ENCODE measurements at regions of chr6 and their contacts with region 1.

Region 1: DNA sequence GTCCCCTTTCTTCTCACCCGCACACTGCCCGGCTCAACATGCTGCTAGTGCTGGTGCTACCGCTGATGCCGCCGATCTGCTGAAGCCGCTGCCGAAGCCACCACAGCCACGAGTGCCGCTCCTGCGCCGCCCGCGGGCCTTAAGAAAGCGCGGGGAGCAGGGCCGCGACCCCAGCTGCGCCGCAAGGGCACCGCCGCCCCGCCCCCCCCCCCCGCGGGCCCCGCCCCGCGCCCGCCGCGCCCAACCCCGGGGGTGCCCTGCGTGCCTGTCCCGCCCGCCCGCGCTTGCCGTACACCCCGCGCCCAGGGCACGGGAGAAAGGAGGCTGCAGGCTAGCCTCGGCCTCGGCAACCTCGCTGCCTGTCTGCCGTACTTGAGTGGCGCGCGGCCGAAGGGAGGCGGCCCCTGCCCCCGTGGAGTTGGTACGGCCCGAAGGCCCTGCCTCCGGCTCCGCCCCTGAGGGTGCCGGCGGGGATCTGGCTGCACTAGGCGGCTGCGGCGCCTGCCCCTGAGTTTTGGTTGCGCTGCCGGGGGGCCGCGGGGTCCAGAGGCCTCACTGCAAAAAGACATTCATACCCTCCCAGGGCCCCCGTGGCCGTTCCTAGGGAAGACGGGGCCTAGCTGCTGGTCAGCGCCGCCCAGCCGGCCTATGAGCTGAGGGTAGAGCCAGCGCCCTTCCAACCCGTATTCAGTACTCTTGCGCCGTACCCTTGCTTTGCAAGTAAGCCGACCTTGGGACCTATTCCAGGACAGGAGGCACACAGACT is at the start of gene SOD2:
- DNase-seq: no peak
- H3K4me3 ChIP-seq: peak within 1 kb of the TSS; percentile 76
- CTCF ChIP-seq: no peak

Region 2: GRCh38 chr6:159679091-159680077 is 13.9 kb before region 1 on chr6:
- CTCF ChIA-PET with region 1: interaction called, 22 read pairs
- POLR2A ChIA-PET with region 1: no interaction called
- DNase-seq: no peak
- H3K4me3 ChIP-seq: no peak overlapping the region
- CTCF ChIP-seq: no peak

Region 3: GRCh38 chr6:159726918-159727716 is 33.8 kb after region 1 on chr6 and contains the start of gene WTAP:
- CTCF ChIA-PET with region 1: interaction called, 11 read pairs
- POLR2A ChIA-PET with region 1: interaction called, 10 read pairs
- DNase-seq: peak; percentile 54
- H3K4me3 ChIP-seq: peak within 1 kb of the TSS; percentile 83
- CTCF ChIP-seq: no peak

Region 4: DNA sequence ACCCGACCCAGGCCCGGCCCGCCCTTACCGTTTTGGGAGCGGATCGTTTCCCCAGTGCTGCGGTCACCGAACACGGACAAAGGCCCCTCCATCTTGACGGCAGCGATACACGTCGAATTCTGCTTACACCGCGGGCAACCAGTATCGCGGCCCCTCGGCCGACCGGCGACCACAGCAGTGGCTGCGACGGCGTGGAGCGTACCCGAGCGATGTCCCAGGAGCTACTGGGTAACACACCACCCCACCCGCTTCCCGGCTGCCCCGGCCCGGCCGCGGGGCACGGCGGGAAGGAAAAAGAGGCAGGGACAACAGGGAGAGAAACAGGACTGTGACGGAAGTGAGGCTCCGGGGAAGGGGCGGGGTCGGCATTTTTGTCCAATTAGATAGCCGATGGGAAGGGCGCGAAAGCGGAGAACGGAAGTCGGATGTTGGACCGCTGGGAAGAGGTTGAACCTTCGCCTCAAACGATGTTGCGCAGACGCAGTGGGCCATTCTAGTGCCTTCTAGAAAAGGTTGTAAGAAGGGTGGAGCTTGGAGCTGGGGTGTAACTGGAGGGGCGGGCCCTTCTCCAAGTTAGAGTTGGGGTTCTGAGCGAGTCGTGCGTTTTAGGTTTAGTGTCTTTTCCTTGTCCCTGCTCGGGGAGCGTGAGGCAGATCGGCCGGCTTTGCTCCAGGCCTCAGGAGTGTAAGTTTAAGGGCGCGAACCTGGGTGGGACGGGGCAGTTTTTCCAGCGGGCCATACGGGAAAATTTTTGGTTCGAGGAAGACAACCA is 96.3 kb after region 1 on chr6 and contains the start of gene TCP1:
- CTCF ChIA-PET with region 1: interaction called, 21 read pairs
- POLR2A ChIA-PET with region 1: interaction called, 12 read pairs
- DNase-seq: peak; percentile 98
- H3K4me3 ChIP-seq: peak within 1 kb of the TSS; percentile 95
- CTCF ChIP-seq: no peak

Region 5: DNA sequence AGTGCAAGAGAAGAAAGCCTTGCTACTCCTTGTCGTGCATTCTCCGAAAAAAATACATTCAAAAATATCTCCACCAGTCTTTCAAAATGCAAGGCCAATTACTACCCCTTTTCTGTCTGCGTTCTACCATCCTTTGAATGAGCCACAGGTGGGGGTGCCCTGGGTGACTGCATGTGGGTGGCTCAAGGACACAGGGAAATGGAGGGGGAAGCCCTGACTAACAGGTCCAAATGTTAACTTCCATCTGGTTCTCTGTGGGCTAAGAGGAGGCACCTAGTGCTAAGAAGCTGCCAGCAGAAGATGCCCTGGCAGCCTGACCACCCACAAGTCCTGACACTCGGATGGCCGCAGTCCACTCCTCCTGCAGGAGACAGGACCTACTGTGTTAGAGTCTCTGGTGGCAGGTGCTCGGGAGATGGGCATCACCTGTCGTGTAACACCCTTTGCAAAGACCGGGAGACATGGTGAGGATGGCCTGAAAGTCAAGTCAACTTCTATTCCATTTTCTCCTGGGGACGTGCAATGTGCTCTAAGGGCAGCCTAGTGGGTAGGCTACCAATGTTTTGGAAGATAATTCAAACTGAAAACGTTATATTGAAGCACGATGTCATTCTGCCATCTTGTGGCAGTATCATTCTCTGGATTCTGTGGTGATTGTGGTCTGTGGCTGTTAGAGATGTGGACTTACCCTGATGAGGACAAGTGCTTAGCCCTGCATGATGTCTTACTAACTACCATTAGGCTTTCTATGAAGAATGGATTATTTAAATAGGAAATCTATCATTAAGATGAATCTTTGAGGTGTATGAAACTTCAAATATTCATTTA is 248.2 kb after region 1 on chr6:
- CTCF ChIA-PET with region 1: interaction called, 24 read pairs
- POLR2A ChIA-PET with region 1: no interaction called
- DNase-seq: no peak
- H3K4me3 ChIP-seq: no peak overlapping the region
- CTCF ChIP-seq: peak; percentile 47

Measured in AG04449 (cell line).